Gastrocnemius medialis (tissue), 4 donors: ENCODE measurements at regions of chr2 and their contacts with region 1.

Region 1: GRCh38 chr2:56009758-56010458 is 86.3 kb upstream of the EFEMP1 start:
- DNase-seq: no peak
- ATAC-seq: no peak
- H3K4me3 ChIP-seq: no peak overlapping the region
- H3K27ac ChIP-seq: no peak overlapping the region
- H3K4me1 ChIP-seq: no peaks in the 10 kb centered on the region
- H3K27me3 ChIP-seq: no peaks in the 10 kb centered on the region
- CTCF ChIP-seq: peak in 3 of 5 experiments; percentile 13 to 23 (median 13)
- POLR2A ChIP-seq: no peak

Region 2: GRCh38 chr2:55771612-55772011 is 238.3 kb before region 1 on chr2:
- in situ Hi-C with region 1: no loop called
- intact Hi-C with region 1: loop called (anchors 5 kb)
- DNase-seq: no peak
- ATAC-seq: no peak
- H3K4me3 ChIP-seq: no peak overlapping the region
- H3K27ac ChIP-seq: no peak overlapping the region
- H3K4me1 ChIP-seq: no peaks in the 10 kb centered on the region
- H3K27me3 ChIP-seq: no peaks in the 10 kb centered on the region
- CTCF ChIP-seq: peak in 4 of 5 experiments; percentile 15 to 40 (median 23)
- POLR2A ChIP-seq: no peak

Region 3: GRCh38 chr2:55875434-55876135 is 134.3 kb before region 1 on chr2:
- in situ Hi-C with region 1: no loop called
- intact Hi-C with region 1: no loop called
- DNase-seq: no peak
- ATAC-seq: no peak
- H3K4me3 ChIP-seq: no peak overlapping the region
- H3K27ac ChIP-seq: no peak overlapping the region
- H3K4me1 ChIP-seq: no peaks in the 10 kb centered on the region
- H3K27me3 ChIP-seq: no peaks in the 10 kb centered on the region
- CTCF ChIP-seq: no peak
- POLR2A ChIP-seq: no peak

Region 4: DNA sequence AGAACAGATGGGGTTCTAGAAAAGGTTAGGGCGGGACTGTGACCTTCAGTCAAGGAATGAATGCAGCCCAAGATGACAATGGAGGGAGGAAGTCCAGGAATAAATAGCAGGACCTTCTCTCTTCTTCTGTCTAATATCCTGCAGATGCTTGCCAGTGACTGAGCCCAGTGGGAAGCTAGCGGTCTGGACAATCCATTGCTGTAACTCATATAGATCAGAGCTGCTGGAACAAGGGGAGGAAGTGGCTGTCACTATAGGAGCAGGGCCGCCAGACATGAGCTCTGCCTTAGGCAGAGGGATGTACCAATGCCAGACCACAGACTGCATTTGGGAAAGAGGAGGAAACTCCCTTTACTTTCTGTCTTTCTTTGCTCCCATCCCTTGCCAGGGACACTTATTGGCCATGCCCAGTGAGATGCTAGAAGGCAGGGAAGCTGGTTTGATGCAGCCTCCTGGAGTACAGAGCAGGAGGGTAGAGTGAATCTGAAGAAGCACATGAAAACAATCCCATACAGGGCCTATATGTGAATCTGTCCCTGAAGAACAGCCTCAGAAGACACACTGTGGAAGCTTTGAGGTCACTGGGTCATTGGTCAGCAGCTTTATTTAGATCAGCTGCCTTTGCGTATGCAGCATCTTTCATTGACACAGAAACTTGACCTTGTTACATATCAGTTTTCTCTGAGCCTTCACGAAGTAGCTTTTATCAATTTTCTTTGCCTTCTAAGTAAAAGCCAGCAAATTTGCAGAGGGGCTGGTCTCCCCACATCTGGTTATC is 239.2 kb after region 1 on chr2:
- in situ Hi-C with region 1: no loop called
- intact Hi-C with region 1: no loop called
- DNase-seq: no peak
- ATAC-seq: no peak
- H3K4me3 ChIP-seq: no peak overlapping the region
- H3K27ac ChIP-seq: no peak overlapping the region
- H3K4me1 ChIP-seq: peaks cover 12 to 16% of the 10 kb centered on the region in 2 donors
- H3K27me3 ChIP-seq: no peaks in the 10 kb centered on the region
- CTCF ChIP-seq: no peak
- POLR2A ChIP-seq: no peak